Cardiac septum (tissue), 1 donor: ENCODE measurements at regions of chr12 and their contacts with region 1.

Region 1: GRCh38 chr12:7933255-7933729 is 2.7 kb downstream of the SLC2A3 start:
- DNase-seq: peak; percentile 87

Region 2: GRCh38 chr12:7859552-7859951 is 73.7 kb before region 1 on chr12:
- intact Hi-C with region 1: loop called (anchors 2 kb)
- DNase-seq: no peak

Region 3: GRCh38 chr12:7959701-7960121 is 26.4 kb after region 1 on chr12:
- intact Hi-C with region 1: loop called (anchors 1 kb)
- DNase-seq: peak; percentile 85

Region 4: GRCh38 chr12:7970475-7971252 is 37.4 kb after region 1 on chr12:
- intact Hi-C with region 1: loop called (anchors 2 kb)
- DNase-seq: peak; percentile 93

Region 5: GRCh38 chr12:7995266-7995963 is 62.1 kb after region 1 on chr12:
- intact Hi-C with region 1: loop called (anchors 1 kb)
- DNase-seq: peak; percentile 92